Lower lobe of right lung (tissue), 2 donors: ENCODE measurements at regions of chr14 and their contacts with region 1.

Region 1: DNA sequence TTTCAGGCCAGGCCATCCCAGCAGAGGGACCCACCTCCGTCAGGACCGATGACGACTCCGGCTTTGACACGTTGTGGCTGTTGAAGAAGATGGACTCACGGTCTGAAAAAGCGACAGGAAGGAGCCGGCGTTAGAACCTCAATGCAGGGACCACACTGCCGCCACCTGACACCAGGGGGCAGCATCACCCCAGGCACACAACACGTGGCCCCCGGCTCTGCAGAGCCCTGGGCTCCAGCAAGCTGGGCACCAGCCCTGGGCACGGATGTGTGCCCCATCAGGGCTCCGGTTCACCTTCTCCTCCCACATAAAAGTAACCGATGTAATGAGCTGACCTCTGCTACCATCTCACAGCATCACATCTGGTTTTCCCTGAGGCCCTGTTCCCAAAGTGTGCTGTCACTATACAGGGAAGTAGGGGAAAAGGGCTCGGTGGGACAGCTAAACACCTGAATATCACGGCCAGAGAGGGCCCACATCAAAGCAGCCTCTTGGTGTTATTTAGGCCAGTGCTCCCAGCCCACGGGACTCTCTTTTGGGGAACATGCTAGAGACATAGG is 29.0 kb downstream of the CHGA start:
- DNase-seq: peak; percentile 83
- ATAC-seq: peak; percentile 91 to 92
- H3K4me3 ChIP-seq: no peak overlapping the region
- H3K27ac ChIP-seq: no peak overlapping the region
- H3K4me1 ChIP-seq: no peaks in the 10 kb centered on the region
- H3K27me3 ChIP-seq: no peaks in the 10 kb centered on the region
- CTCF ChIP-seq: peak; percentile 97

Region 2: GRCh38 chr14:92686900-92687444 is 265.0 kb before region 1 on chr14:
- intact Hi-C with region 1: no loop called
- DNase-seq: peak; percentile 84
- ATAC-seq: peak; percentile 90 to 91
- H3K4me3 ChIP-seq: peak overlapping the region; percentile 54
- H3K27ac ChIP-seq: no peak overlapping the region
- H3K4me1 ChIP-seq: peaks cover 15% of the 10 kb centered on the region
- H3K27me3 ChIP-seq: no peaks in the 10 kb centered on the region
- CTCF ChIP-seq: peak; percentile 99

Region 3: GRCh38 chr14:93132470-93133065 is 180.6 kb after region 1 on chr14:
- intact Hi-C with region 1: loop called (anchors 10 kb)
- DNase-seq: no peak
- ATAC-seq: peak; percentile 65 to 79
- H3K4me3 ChIP-seq: no peak overlapping the region
- H3K27ac ChIP-seq: peak overlapping the region; percentile 48
- H3K4me1 ChIP-seq: peaks cover 24% of the 10 kb centered on the region
- H3K27me3 ChIP-seq: no peaks in the 10 kb centered on the region
- CTCF ChIP-seq: peak; percentile 38